ENCODE measurements at regions of chr20 and their contacts with region 1.

Region 1: GRCh38 chr20:23092384-23092756 is 6.2 kb upstream of the CD93 start:
- DNase-seq: no peak

Region 2: GRCh38 chr20:23071996-23072395 is 20.4 kb before region 1 on chr20:
- intact Hi-C with region 1: loop called (anchors 2 kb)
- DNase-seq: no peak

Measured in posterior cingulate gyrus (tissue), 11 donors.